ENCODE measurements at regions of chr10 and their contacts with region 1.

Region 1: GRCh38 chr10:108849688-108850087 is 1073.6 kb downstream of the XPNPEP1 start:
- DNase-seq: no peak
- ATAC-seq: no peak
- H3K4me3 ChIP-seq: no peak overlapping the region
- H3K27ac ChIP-seq: no peak overlapping the region
- H3K4me1 ChIP-seq: no peaks in the 10 kb centered on the region
- H3K27me3 ChIP-seq: no peaks in the 10 kb centered on the region
- CTCF ChIP-seq: no peak
- EP300 ChIP-seq: no peak
- POLR2A ChIP-seq: no peak
- RAD21 ChIP-seq: no peak

Region 2: GRCh38 chr10:108249940-108250339 is 599.7 kb before region 1 on chr10:
- CTCF ChIA-PET with region 1: no interaction called
- POLR2A ChIA-PET with region 1: no interaction called
- in situ Hi-C with region 1: no loop called
- intact Hi-C with region 1: loop called (anchors 10 kb)
- DNase-seq: no peak
- ATAC-seq: no peak
- H3K4me3 ChIP-seq: no peak overlapping the region
- H3K27ac ChIP-seq: no peak overlapping the region
- H3K4me1 ChIP-seq: no peaks in the 10 kb centered on the region
- H3K27me3 ChIP-seq: no peaks in the 10 kb centered on the region
- CTCF ChIP-seq: no peak
- EP300 ChIP-seq: no peak
- POLR2A ChIP-seq: no peak
- RAD21 ChIP-seq: no peak